Heart left ventricle (tissue), 16 donors: ENCODE measurements at regions of chr4 and their contacts with region 1.

Region 1: GRCh38 chr4:85968945-85969819 is 390.7 kb downstream of the MAPK10 start:
- DNase-seq: no peak
- ATAC-seq: peak; percentile 38 to 74 (median 55)
- H3K4me3 ChIP-seq: no peak overlapping the region
- H3K27ac ChIP-seq: no peak overlapping the region
- H3K4me1 ChIP-seq: peaks cover 0 to 43% (median 12%) of the 10 kb centered on the region in 12 donors
- H3K27me3 ChIP-seq: no peaks in the 10 kb centered on the region
- CTCF ChIP-seq: peak; percentile 44 to 78 (median 63)
- POLR2A ChIP-seq: no peak

Region 2: DNA sequence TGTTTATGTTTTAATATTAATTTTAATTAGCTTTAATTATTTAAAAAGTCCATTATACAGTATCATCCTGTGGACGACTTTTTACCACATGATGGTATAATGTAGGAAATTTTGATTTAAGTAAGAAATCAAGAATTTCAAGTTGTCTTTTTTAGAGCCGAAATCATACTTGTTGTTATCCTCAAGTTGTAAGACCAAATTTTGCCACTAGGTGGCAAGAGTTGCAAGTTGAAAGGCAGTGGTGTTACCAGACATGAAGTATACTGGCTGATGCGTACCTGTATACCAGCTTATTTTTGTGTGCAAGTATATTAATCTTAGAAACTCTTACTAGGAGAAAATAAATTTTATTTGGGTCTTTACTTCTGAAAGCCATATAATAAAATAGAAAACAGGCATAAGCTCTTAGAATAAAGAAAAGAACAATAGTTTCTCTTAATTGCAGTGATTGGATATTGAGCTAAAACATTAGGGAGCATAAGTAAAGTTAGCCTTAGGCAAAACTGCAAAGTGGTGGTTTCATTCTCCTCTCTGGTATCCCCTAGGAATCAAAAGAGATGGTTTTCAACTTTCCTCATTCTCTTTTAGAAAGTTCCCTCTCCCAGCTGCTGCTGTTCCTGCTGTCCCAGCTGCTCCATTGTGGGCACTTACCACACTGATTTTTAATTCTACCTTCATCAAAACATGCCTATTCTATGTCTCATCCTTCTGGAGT is 884.6 kb before region 1 on chr4:
- intact Hi-C with region 1: loop called in 2 of 10 experiments (anchors 5 to 10 kb)
- DNase-seq: peak in 2 of 5 donors; percentile 25 to 36
- ATAC-seq: peak in 2 of 4 donors; percentile 63 to 75
- H3K4me3 ChIP-seq: no peak overlapping the region
- H3K27ac ChIP-seq: no peak overlapping the region
- H3K4me1 ChIP-seq: peaks cover 0 to 5% (median 0%) of the 10 kb centered on the region in 12 donors
- H3K27me3 ChIP-seq: no peaks in the 10 kb centered on the region
- CTCF ChIP-seq: peak; percentile 58 to 87 (median 74)
- POLR2A ChIP-seq: no peak

Region 3: GRCh38 chr4:85147439-85148076 is 821.6 kb before region 1 on chr4:
- intact Hi-C with region 1: loop called in 9 of 10 experiments (anchors 1 to 10 kb)
- DNase-seq: peak; percentile 49 to 72 (median 58)
- ATAC-seq: peak; percentile 59 to 77 (median 76)
- H3K4me3 ChIP-seq: peak overlapping the region in 8 of 12 donors; percentile 10 to 45 (median 34)
- H3K27ac ChIP-seq: peak overlapping the region in 3 of 12 donors; percentile 4 to 36 (median 23)
- H3K4me1 ChIP-seq: peaks cover 0 to 21% (median 4%) of the 10 kb centered on the region in 12 donors
- H3K27me3 ChIP-seq: no peaks in the 10 kb centered on the region
- CTCF ChIP-seq: peak; percentile 50 to 80 (median 72)
- POLR2A ChIP-seq: no peak

Region 4: DNA sequence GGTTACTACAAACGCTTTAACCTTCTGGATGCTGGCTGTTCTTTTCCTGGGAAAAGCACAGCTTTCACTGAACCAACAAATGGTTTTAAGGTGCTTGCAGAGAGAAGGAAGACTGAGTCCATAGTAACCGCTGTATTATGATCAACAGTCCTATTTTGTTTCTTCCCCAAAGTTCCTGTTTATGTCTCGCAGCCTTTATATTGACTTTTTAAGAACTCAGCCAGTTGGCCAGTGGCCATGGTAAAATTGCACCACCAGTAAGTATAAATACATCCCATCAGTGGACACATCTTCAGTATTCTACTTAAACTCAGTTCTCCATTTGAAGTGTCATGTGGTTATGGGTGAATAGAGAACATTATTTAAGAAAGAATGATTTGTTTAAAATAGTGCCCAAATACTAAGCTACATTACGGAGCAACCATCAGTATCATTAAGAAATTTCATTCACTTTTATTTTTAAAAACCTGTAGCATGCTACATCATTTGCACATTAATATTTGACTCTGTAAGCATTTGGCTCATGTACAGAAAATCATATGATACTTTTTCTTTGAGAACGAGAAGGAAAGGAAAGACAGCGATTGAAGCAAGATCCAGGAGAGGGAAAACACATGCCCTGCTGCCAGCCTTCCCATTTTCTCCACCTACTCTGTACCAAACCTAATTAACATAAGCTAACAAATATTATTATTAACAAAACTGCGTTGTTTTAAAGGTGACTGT is 207.2 kb before region 1 on chr4:
- intact Hi-C with region 1: loop called in 6 of 10 experiments (anchors 5 to 10 kb)
- DNase-seq: peak in 4 of 5 donors; percentile 33 to 66 (median 47)
- ATAC-seq: peak; percentile 44 to 70 (median 58)
- H3K4me3 ChIP-seq: peak overlapping the region in 1 of 12 donors; percentile 3
- H3K27ac ChIP-seq: peak overlapping the region in 11 of 12 donors; percentile 22 to 61 (median 36)
- H3K4me1 ChIP-seq: peaks cover 0 to 38% (median 20%) of the 10 kb centered on the region in 12 donors
- H3K27me3 ChIP-seq: no peaks in the 10 kb centered on the region
- CTCF ChIP-seq: no peak
- POLR2A ChIP-seq: no peak

Region 5: DNA sequence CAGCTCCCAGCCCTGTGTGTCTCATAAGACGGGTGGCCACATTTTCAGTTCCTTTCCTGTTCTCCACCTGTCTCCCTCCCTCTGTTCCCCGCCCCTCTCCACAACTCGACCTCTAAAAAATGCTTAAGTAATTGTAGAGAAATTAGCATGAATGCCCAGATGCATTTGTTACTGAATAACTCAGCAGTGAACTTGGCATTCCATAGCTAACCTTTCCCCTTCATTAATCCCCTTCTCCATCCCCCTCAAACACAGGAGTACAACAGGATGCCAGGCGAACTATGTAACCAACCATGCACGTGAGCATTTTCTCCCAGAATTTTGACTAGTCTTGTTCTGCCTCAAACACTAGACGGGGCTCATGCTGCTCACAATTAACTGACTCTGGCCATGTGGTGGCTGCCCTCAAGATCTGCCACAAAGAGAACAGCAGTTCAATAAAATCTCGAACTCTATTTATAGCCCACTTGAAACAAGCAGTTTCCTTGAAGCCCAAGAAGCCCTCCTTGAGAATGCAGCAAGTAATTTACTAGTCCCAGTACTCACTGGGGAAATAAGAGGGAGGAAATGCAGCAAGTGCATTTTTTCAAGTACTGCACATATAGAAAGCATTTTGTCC is 143.0 kb before region 1 on chr4:
- intact Hi-C with region 1: loop called in 3 of 10 experiments (anchors 10 kb)
- DNase-seq: peak in 2 of 5 donors; percentile 40 to 44
- ATAC-seq: peak; percentile 21 to 69 (median 44)
- H3K4me3 ChIP-seq: no peak overlapping the region
- H3K27ac ChIP-seq: peak overlapping the region in 8 of 12 donors; percentile 1 to 54 (median 14)
- H3K4me1 ChIP-seq: peaks cover 0 to 81% (median 42%) of the 10 kb centered on the region in 12 donors
- H3K27me3 ChIP-seq: no peaks in the 10 kb centered on the region
- CTCF ChIP-seq: peak in 7 of 12 donors; percentile 7 to 49 (median 23)
- POLR2A ChIP-seq: no peak

Region 6: DNA sequence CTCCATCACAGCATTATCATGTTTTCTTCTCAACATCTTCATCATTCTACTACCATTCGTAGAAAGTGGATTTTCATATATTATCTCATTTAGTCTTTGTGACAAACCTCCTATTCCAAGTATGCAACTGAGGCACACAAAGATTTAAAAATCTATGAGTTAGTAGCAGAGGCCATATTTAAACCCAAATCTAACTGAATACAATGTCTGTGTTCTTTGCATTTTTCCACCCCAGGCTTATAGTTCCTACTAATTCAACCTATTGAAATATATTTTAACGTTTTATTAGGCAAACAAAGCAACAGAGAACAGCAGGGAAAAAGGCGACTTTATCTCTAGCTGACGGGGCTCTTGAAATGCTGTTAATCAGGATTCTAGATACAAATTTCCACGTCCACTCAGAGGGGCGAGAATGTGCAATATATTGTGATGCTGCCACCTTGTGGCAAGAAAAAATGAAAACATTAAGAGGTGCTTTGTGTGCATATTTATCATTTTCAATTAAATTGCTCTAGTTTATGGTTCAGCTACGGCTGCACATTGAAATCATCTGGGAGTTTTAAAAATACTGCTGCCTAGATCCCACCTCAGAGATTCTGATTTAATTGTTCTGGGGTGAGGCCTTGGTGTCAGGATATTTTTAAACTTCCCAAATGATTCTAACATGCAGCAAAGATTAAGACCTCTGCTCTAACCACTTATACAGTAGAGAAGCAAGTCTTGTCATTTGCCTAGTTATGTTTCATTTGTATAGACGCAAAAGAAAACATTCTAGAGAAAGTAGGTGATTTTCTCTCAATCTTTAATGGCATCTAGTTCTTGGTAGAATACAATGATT is 74.8 kb after region 1 on chr4:
- intact Hi-C with region 1: loop called in 4 of 10 experiments (anchors 5 to 10 kb)
- DNase-seq: peak in 3 of 5 donors; percentile 15 to 24 (median 18)
- ATAC-seq: peak in 2 of 4 donors; percentile 46 to 47
- H3K4me3 ChIP-seq: no peak overlapping the region
- H3K27ac ChIP-seq: no peak overlapping the region
- H3K4me1 ChIP-seq: peaks cover 0 to 9% (median 0%) of the 10 kb centered on the region in 12 donors
- H3K27me3 ChIP-seq: no peaks in the 10 kb centered on the region
- CTCF ChIP-seq: peak; percentile 58 to 77 (median 74)
- POLR2A ChIP-seq: no peak

Region 7: GRCh38 chr4:86184216-86184900 is 215.2 kb after region 1 on chr4:
- intact Hi-C with region 1: no loop called
- DNase-seq: no peak
- ATAC-seq: no peak
- H3K4me3 ChIP-seq: no peak overlapping the region
- H3K27ac ChIP-seq: no peak overlapping the region
- H3K4me1 ChIP-seq: no peaks in the 10 kb centered on the region
- H3K27me3 ChIP-seq: no peaks in the 10 kb centered on the region
- CTCF ChIP-seq: no peak
- POLR2A ChIP-seq: no peak